H1 (cell line): ENCODE measurements at regions of chr10 and their contacts with region 1.

Region 1: GRCh38 chr10:69515699-69516259 is 57.4 kb downstream of the NEUROG3 start:
- DNase-seq: peak; percentile 63 to 90
- H3K4me3 ChIP-seq: no peak overlapping the region
- H3K27ac ChIP-seq: no peak overlapping the region
- H3K4me1 ChIP-seq: peaks cover 0 to 2% (median 0%) of the 10 kb centered on the region in 4 experiments; a peak in 2 of 7 replicates
- H3K27me3 ChIP-seq: no peaks in the 10 kb centered on the region
- CTCF ChIP-seq: peak; percentile 96 to 98 (median 97)
- EP300 ChIP-seq: no peak
- POLR2A ChIP-seq: no peak
- RAD21 ChIP-seq: peak; percentile 98 to 99

Region 2: DNA sequence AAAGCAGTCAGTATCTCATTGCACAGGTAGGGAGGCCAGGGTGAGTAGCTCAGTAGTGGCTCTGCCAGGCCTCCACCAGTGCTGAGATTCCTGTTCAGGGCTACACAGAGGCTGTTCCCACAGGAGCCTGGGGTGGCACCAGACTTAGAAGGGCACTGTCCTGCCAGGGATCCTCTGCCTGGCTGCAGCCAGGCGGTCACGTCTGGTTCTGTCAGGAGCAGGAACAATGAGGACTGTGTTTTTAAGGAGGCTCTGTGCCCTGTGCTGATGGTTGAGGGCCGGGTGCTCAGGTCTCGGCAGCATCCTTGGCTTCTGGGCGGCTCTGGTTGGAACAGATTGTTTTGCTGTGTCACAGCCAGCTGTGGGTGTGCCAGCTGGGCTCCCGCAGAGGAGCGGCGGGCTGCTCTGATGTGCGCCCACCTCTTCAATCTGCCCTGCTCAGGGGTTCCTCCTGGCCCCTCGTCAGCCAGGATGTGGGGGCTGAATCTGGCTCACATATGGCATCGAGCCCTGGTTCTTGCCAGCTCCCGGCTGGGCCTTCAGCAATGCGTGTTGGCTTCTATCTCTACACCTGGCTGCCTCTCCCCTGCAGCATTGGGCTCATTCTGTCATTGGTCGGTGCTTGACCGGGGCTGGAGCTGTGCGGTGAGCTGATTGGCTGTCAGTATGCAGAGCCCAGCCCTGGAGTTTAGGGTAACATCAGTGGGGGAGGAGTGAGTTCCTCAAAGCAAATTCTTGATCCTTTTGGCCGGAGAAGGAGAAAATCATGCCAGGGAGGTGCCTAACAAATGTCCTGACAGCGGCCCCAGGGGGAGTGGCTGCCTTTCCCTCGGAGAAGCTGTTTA is 140.2 kb before region 1 on chr10:
- CTCF ChIA-PET with region 1: no interaction called
- POLR2A ChIA-PET with region 1: no interaction called
- DNase-seq: peak; percentile 39 to 77
- H3K4me3 ChIP-seq: 0 out of 8 replicates have a peak overlapping the region, but pooled peaks of 1 of the 4 experiments have one; percentile 11
- H3K27ac ChIP-seq: peak overlapping the region; percentile 51; the same call in 1 of the 2 replicates
- H3K4me1 ChIP-seq: peaks cover 0 to 20% (median 12%) of the 10 kb centered on the region in 4 experiments; a peak in 6 of 7 replicates
- H3K27me3 ChIP-seq: no peaks in the 10 kb centered on the region
- CTCF ChIP-seq: no peak
- EP300 ChIP-seq: no peak
- POLR2A ChIP-seq: peak in 1 of 2 experiments; percentile 28; a peak in 1 of 3 replicates
- RAD21 ChIP-seq: no peak; a peak in 1 of 4 replicates

Region 3: DNA sequence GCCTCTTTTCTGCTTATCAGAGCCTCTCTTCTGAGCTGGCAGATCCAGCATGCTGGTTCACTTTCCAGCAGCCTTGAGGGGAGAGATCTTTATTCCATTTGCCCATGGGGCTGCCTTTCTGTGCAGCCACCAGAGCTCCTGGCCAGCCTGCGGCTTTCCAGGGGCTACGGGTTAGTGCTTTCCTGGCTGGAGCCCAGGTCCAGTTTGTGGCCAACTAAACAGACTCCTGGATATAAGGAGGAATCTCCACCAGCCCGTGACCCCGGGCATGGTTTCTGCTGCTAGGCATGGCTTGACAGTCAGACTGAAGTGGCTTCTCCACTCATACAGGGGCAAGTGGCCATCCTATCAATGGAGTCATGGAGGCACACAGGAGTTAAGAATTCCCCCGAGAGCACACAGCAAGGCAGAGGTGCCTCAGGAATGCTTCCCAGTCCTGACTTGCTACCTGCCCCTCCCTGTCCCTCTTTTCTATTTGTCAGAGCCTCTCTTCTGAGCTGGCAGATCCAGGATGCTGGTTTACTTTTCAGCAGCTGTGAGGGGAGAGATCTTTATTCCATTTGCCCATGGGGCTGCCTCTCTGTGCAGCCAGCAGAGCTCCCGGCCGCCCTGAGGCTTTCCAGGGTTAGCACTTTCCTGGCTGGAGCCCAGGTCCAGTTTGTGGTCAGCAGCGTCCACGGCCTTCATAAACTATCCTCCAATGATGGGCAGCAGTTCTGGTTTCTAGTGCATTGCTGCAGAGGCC is 28.7 kb before region 1 on chr10:
- CTCF ChIA-PET with region 1: interaction called, 12 read pairs
- POLR2A ChIA-PET with region 1: no interaction called
- DNase-seq: no peak
- H3K4me3 ChIP-seq: no peak overlapping the region
- H3K27ac ChIP-seq: no peak overlapping the region
- H3K4me1 ChIP-seq: 0 out of 7 replicates have a peak, but pooled peaks cover 0 to under 1% (median 0%) of the 10 kb centered on the region in 4 experiments
- H3K27me3 ChIP-seq: no peaks in the 10 kb centered on the region
- CTCF ChIP-seq: no peak
- EP300 ChIP-seq: no peak
- POLR2A ChIP-seq: no peak
- RAD21 ChIP-seq: no peak

Region 4: DNA sequence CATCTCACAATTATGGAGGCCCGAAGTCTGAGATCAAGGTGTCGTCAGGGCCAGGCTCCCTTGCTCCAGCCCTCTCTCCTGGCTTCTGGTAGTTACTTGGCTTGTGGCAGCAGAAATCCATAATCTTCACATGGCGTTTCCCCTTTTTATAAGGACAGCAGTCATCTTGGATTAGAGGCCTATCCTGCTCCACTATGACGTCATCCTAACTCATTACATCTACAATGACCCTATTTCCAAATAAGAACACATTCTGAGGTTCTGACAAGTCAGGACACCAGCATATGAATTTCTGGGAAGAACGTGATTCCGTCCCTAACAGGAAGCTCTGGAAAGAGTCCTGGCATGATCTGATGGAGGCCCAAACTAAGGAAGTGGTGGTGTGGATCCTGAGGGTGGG is 21.7 kb after region 1 on chr10:
- CTCF ChIA-PET with region 1: interaction called, 12 read pairs
- POLR2A ChIA-PET with region 1: no interaction called
- DNase-seq: no peak
- H3K4me3 ChIP-seq: no peak overlapping the region
- H3K27ac ChIP-seq: no peak overlapping the region
- H3K4me1 ChIP-seq: no peaks in the 10 kb centered on the region
- H3K27me3 ChIP-seq: no peaks in the 10 kb centered on the region; a peak in 1 of 7 replicates
- CTCF ChIP-seq: no peak
- EP300 ChIP-seq: no peak
- POLR2A ChIP-seq: no peak
- RAD21 ChIP-seq: no peak

Region 5: DNA sequence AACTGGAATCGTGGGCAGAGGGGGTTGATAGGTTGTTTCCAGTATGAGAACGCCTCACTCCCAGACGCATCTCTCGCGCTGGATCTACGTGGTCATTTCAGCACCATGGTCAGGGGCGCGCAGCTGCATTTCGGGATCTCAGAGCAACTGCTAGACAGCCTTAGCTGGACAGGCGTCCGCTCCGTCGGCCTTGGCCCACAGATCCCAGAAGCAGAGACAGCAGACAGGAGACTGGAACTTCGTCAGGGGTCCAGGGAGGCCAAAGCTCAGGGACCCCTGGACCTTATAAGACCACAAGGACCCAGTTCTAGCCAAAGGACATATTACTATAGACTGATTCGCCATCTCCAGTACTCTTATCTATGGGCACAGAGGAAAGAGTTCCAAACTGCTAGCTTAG is 52.1 kb after region 1 on chr10:
- CTCF ChIA-PET with region 1: interaction called, 76 read pairs
- POLR2A ChIA-PET with region 1: interaction called, 6 read pairs
- DNase-seq: peak in 1 of 2 experiments; percentile 90
- H3K4me3 ChIP-seq: peak overlapping the region in 2 of 4 experiments; percentile 9 to 61; a peak in 3 of 8 replicates
- H3K27ac ChIP-seq: no peak overlapping the region
- H3K4me1 ChIP-seq: peaks cover 19 to 49% (median 35%) of the 10 kb centered on the region in 4 experiments
- H3K27me3 ChIP-seq: peaks cover 52 to 90% (median 78%) of the 10 kb centered on the region in 4 experiments
- CTCF ChIP-seq: no peak
- EP300 ChIP-seq: no peak
- POLR2A ChIP-seq: no peak
- RAD21 ChIP-seq: no peak

Region 6: GRCh38 chr10:69588386-69588785 is 72.6 kb after region 1 on chr10:
- CTCF ChIA-PET with region 1: interaction called, 68 read pairs
- POLR2A ChIA-PET with region 1: no interaction called
- DNase-seq: no peak
- H3K4me3 ChIP-seq: no peak overlapping the region
- H3K27ac ChIP-seq: no peak overlapping the region
- H3K4me1 ChIP-seq: no peaks in the 10 kb centered on the region; a peak in 1 of 7 replicates
- H3K27me3 ChIP-seq: peaks cover 0 to 6% (median 2%) of the 10 kb centered on the region in 4 experiments; a peak in 5 of 7 replicates
- CTCF ChIP-seq: no peak
- EP300 ChIP-seq: no peak
- POLR2A ChIP-seq: no peak
- RAD21 ChIP-seq: peak in 1 of 2 experiments; percentile 20; a peak in 1 of 4 replicates

Region 7: DNA sequence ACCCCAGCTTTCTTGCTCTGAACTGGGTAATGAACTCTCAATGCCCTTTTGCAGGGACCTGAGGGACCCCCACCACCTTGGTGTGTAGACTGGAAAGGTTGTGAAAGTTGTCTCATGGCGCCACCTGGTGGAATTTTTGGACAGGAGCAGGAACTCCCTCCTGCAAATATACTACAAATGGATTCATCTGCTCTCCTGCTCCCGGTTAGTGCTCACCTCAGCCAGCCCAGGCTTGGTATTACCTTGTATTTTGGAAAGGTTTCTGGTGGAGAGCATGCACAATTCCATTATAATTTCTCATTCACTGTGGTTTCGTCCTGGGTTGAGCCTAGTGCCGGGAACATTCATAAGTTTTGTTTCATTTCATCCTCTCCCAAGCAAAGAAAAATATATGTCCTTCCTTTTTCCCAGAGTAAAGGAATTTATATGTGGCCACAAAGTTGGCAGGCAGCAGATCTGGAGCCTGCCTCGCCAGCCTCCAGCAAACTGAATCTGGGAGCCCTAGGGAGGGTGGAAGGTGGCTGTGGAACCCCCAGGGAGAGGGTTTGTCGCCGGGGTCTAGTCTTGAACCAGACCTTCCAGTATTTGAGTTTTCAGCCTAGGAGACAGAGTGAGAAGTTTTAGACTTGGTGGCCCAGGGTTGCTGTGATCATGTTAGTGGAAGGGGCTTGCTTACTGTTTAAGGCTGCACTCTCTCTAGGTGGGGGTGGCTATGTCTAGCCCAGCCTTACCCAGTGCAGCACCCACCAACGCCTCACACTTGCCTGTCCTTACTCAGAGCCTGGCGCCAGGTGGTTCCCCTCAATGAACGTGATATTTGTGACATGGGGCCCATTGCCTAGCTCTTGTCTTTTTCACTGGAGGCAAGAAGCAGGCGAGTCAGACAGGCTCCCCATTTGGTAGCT is 123.8 kb after region 1 on chr10:
- CTCF ChIA-PET with region 1: interaction called, 1,068 read pairs
- POLR2A ChIA-PET with region 1: interaction called, 59 read pairs
- DNase-seq: peak in 1 of 2 experiments; percentile 80
- H3K4me3 ChIP-seq: no peak overlapping the region
- H3K27ac ChIP-seq: no peak overlapping the region
- H3K4me1 ChIP-seq: peaks cover 4 to 9% (median 7%) of the 10 kb centered on the region in 4 experiments
- H3K27me3 ChIP-seq: no peaks in the 10 kb centered on the region
- CTCF ChIP-seq: peak; percentile 64 to 97 (median 89)
- EP300 ChIP-seq: 0 out of 3 replicates have a peak, but pooled peaks of 1 of the 2 experiments have one; percentile 33
- POLR2A ChIP-seq: no peak
- RAD21 ChIP-seq: peak; percentile 98 to 99